Esophagus squamous epithelium (tissue), 5 donors: ENCODE measurements at regions of chr3 and their contacts with region 1.

Region 1: GRCh38 chr3:38136777-38137614 is at the start of gene ACAA1:
- DNase-seq: peak; percentile 98
- H3K4me3 ChIP-seq: peak within 1 kb of the TSS; percentile 64 to 99 (median 90)
- H3K27ac ChIP-seq: peak within 1 kb of the TSS; percentile 90 to 98 (median 94)
- H3K4me1 ChIP-seq: peaks cover 39 to 78% (median 49%) of the 10 kb centered on the region in 3 donors
- H3K27me3 ChIP-seq: no peaks in the 10 kb centered on the region
- CTCF ChIP-seq: peak in 1 of 6 experiments; percentile 16
- POLR2A ChIP-seq: peak in 3 of 4 donors; percentile 41 to 84 (median 66)
- total RNA-seq, gene ACAA1: 63.5 to 75.2 (median 68.7) TPM

Region 2: DNA sequence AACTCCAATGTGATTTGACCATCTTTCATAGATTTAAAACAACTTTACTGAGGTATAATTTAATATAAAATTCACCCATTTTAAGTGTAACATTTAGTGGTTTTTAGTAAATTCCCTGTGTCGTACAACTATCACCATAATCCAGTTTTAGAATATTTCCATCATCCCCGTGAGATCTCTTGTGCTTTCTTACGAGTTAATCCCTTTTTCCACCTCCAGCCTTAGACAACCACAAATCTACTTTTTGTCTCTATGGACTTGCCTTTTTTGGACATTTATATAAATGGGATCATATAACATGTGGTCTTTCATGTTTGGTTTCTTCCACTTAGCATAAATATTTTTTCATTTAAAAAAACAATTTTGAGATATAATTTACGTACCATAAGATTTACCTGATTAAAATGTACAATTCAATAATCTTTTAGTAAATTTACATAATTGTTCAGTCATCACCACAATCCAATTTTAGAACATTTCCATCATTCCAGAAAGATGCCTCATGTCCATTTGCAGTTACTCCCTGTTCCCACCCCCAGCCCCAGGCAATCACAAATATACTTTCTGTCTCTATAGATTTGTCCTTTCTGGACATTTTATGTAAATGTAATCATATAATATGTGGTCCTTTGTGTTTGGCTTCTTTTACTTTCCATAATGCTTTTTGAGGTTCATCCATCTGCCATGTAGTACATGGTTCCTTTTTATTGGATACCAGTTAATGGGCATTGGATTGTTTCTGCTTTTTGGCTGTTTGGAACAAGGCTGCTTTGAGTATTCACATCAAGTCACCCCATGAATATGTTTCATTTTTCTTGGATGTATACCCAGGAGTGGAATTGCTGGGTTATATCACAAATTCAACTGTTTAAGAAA is 31.4 kb after region 1 on chr3:
- intact Hi-C with region 1: loop called (anchors 2 kb)
- DNase-seq: no peak
- H3K4me3 ChIP-seq: no peak overlapping the region
- H3K27ac ChIP-seq: no peak overlapping the region
- H3K4me1 ChIP-seq: peaks cover 9 to 65% (median 20%) of the 10 kb centered on the region in 3 donors
- H3K27me3 ChIP-seq: no peaks in the 10 kb centered on the region
- CTCF ChIP-seq: no peak
- POLR2A ChIP-seq: no peak